GM12878 (cell line): ENCODE measurements at regions of chr9 and their contacts with region 1.

Region 1: GRCh38 chr9:133023117-133023890 is 7.5 kb upstream of the GTF3C5 start:
- DNase-seq: peak; percentile 23
- ATAC-seq: peak; percentile 75
- H3K4me3 ChIP-seq: no peak overlapping the region
- H3K27ac ChIP-seq: no peak overlapping the region
- H3K4me1 ChIP-seq: peaks cover 11% of the 10 kb centered on the region
- H3K27me3 ChIP-seq: no peaks in the 10 kb centered on the region
- CTCF ChIP-seq: no peak
- EP300 ChIP-seq: no peak
- POLR2A ChIP-seq: no peak
- RAD21 ChIP-seq: no peak

Region 2: GRCh38 chr9:132982458-132982857 is 40.8 kb before region 1 on chr9:
- CTCF ChIA-PET with region 1: interaction called, 26 read pairs
- POLR2A ChIA-PET with region 1: no interaction called
- RAD21 ChIA-PET with region 1: interaction called, 5 read pairs
- SMC1A ChIA-PET with region 1: interaction called, 6 read pairs
- in situ Hi-C with region 1: no loop called
- intact Hi-C with region 1: loop called (anchors 1 kb)
- DNase-seq: no peak
- ATAC-seq: peak; percentile 69
- H3K4me3 ChIP-seq: no peak overlapping the region
- H3K27ac ChIP-seq: no peak overlapping the region
- H3K4me1 ChIP-seq: no peaks in the 10 kb centered on the region
- H3K27me3 ChIP-seq: peaks cover 6 to 9% of the 10 kb centered on the region in 2 experiments; a peak in 2 of 4 replicates
- CTCF ChIP-seq: no peak
- EP300 ChIP-seq: no peak
- POLR2A ChIP-seq: no peak
- RAD21 ChIP-seq: no peak

Region 3: DNA sequence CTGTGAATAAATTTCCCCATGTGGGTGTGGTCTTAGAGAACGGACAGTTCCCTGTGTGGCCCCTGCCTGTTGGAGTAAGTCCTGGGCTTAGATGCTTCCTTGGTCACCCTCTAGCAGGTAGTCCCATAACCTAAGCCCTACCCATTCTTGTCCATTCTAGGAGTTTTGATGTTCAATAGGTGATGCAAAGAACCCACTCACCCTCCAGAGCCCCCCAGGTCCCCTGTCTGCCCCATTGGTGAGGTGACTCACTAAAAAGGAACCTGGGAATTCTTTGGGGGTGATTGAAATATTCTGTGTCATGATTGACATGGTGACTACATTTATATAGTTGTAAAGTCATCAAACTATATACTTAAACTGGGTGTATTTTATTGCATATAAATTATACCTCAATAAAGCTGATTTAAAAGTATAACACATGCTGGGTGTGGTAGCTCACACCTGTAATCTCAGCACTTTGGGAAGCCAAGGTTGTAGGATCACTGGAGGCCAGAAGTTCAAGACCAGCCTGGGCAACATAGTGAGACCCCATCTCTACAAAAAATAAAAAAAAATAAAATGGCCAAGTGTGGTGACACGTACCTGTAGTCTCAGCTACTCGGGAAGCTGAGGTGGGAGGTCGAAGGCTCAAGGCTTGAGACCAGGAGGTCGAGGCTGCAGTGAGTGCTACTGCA is 13.3 kb before region 1 on chr9:
- CTCF ChIA-PET with region 1: interaction called, 31 read pairs
- POLR2A ChIA-PET with region 1: interaction called, 4 read pairs
- RAD21 ChIA-PET with region 1: interaction called, 6 read pairs
- SMC1A ChIA-PET with region 1: interaction called, 9 read pairs
- in situ Hi-C with region 1: no loop called
- intact Hi-C with region 1: no loop called
- DNase-seq: no peak
- ATAC-seq: no peak
- H3K4me3 ChIP-seq: no peak overlapping the region
- H3K27ac ChIP-seq: no peak overlapping the region
- H3K4me1 ChIP-seq: no peaks in the 10 kb centered on the region
- H3K27me3 ChIP-seq: no peaks in the 10 kb centered on the region; a peak in 2 of 4 replicates
- CTCF ChIP-seq: no peak
- EP300 ChIP-seq: no peak
- POLR2A ChIP-seq: no peak
- RAD21 ChIP-seq: no peak

Region 4: GRCh38 chr9:133115448-133116345 is 92.4 kb after region 1 on chr9:
- CTCF ChIA-PET with region 1: interaction called, 13 read pairs
- POLR2A ChIA-PET with region 1: interaction called, 4 read pairs
- RAD21 ChIA-PET with region 1: no interaction called
- SMC1A ChIA-PET with region 1: interaction called, 4 read pairs
- in situ Hi-C with region 1: no loop called
- intact Hi-C with region 1: no loop called
- DNase-seq: peak; percentile 79
- ATAC-seq: peak; percentile 88
- H3K4me3 ChIP-seq: peak overlapping the region; percentile 63; the same call in 1 of the 2 replicates
- H3K27ac ChIP-seq: peak overlapping the region; percentile 88
- H3K4me1 ChIP-seq: peaks cover 67% of the 10 kb centered on the region
- H3K27me3 ChIP-seq: no peaks in the 10 kb centered on the region
- CTCF ChIP-seq: no peak
- EP300 ChIP-seq: peak in 1 of 2 experiments; percentile 2; a peak in 1 of 4 replicates
- POLR2A ChIP-seq: no peak
- RAD21 ChIP-seq: no peak

Region 5: DNA sequence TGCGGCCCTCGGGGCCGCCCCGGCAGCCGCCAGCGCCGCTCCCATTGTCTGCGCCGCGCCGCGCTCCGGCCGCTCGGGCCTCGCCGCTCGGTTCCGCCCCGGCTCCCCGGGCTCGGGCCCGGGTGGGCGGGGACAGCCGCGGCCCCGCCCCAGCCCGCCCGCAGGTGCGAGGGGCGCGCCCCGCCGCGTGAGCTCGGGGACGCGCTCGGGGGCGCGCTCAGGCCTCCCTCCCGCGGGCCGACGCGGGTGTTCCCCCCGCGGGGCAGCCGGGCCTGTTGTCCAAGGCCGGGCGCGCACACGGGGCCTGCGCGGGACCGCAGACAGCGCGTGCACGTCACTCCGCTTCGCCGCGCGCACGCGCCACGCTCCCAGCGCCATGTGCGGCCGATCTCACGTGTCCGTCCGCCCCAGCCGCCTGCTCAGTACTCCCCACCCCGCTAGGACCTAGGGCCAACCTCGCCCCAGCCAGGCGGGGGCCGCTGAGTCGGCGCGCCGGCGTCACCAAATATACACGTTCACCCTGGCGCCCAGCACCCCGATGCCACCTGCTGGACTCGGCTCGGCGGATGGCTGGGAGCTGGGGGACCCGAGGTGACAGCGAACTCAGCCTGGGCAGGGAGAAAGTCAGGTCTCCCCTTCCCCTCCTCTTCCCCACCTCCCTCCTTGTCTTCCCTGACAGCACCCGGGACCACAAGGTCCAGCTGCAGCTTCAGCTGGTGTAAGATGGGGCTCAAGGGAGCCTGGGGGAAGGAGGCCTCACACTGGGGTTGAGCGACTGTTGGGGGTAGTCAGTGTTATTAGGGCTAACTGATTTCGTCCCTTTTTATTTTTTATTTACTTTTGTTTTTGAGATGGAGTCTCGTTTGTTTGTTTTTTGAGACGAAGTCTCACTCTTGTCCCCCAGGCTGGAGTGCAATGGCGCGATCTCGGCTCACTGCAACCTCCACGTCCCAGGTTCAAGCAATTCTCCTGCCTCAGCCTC is 126.1 kb after region 1 on chr9:
- CTCF ChIA-PET with region 1: interaction called, 25 read pairs
- POLR2A ChIA-PET with region 1: interaction called, 3 read pairs
- RAD21 ChIA-PET with region 1: interaction called, 11 read pairs
- SMC1A ChIA-PET with region 1: interaction called, 11 read pairs
- in situ Hi-C with region 1: no loop called
- intact Hi-C with region 1: loop called (anchors 5 kb)
- DNase-seq: peak; percentile 85
- ATAC-seq: peak; percentile 85
- H3K4me3 ChIP-seq: peak overlapping the region; percentile 55
- H3K27ac ChIP-seq: peak overlapping the region; percentile 72
- H3K4me1 ChIP-seq: peaks cover 15% of the 10 kb centered on the region
- H3K27me3 ChIP-seq: no peaks in the 10 kb centered on the region
- CTCF ChIP-seq: peak; percentile 23 to 32 (median 26); a peak in 4 of 6 replicates
- EP300 ChIP-seq: no peak
- POLR2A ChIP-seq: no peak
- RAD21 ChIP-seq: peak; percentile 27; the same call in 1 of the 2 replicates

Region 6: GRCh38 chr9:133485361-133486260 is 462.3 kb after region 1 on chr9:
- CTCF ChIA-PET with region 1: interaction called, 5 read pairs
- POLR2A ChIA-PET with region 1: no interaction called
- RAD21 ChIA-PET with region 1: no interaction called
- SMC1A ChIA-PET with region 1: no interaction called
- in situ Hi-C with region 1: no loop called
- intact Hi-C with region 1: loop called (anchors 10 kb)
- DNase-seq: no peak
- ATAC-seq: peak; percentile 76
- H3K4me3 ChIP-seq: no peak overlapping the region
- H3K27ac ChIP-seq: no peak overlapping the region
- H3K4me1 ChIP-seq: peaks cover 3% of the 10 kb centered on the region
- H3K27me3 ChIP-seq: no peaks in the 10 kb centered on the region; a peak in 3 of 4 replicates
- CTCF ChIP-seq: no peak
- EP300 ChIP-seq: no peak
- POLR2A ChIP-seq: no peak
- RAD21 ChIP-seq: no peak